ENCODE measurements at regions of chr5 and their contacts with region 1.

Region 1: DNA sequence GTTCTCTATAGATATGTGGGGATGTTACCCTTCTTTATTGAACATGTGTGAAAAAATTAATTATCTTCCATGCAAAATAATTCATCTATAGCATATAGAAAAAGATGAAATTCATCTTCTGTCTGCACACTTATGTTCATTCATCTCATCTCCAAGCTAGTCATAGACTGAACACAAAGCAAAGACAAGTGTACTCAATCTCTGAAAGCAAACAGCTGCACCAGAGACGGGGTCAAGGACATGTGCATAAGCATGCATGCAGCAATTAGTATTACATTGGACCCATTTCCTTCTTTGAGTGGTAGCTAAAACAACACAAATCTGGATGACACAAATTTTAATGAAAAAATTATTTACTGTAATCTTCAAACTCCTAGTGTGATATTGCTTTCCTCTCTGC is 547.0 kb upstream of the COX7C start:
- DNase-seq: no peak
- ATAC-seq: no peak
- H3K4me3 Mint-ChIP-seq: no peak overlapping the region
- H3K27ac Mint-ChIP-seq: no peak overlapping the region
- H3K4me1 Mint-ChIP-seq: no peaks in the 10 kb centered on the region
- H3K27me3 Mint-ChIP-seq: no peaks in the 10 kb centered on the region
- CTCF ChIP-seq: no peak

Region 2: DNA sequence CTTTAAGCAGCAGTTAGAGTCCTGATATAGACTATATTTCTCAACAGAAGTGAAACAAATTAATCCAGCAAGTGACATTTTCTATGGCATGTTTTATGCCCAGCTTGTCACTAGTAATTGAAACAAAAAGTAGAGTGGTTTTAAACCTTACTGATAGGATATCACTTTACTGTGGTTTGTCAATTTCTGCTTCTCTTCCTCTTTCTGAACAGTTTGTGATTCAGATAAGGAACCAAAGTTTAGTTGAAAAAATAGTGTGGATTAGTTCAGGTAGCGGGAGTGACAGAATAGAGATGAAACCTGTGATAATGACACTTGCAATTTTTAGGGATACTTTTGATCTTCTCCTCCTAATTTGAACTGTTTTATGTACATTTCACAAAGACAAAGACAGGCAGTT is 1200.3 kb before region 1 on chr5:
- CTCF ChIA-PET with region 1: no interaction called
- POLR2A ChIA-PET with region 1: no interaction called
- intact Hi-C with region 1: no loop called
- DNase-seq: no peak
- ATAC-seq: no peak
- H3K4me3 Mint-ChIP-seq: no peak overlapping the region
- H3K27ac Mint-ChIP-seq: no peak overlapping the region
- H3K4me1 Mint-ChIP-seq: no peaks in the 10 kb centered on the region
- H3K27me3 Mint-ChIP-seq: no peaks in the 10 kb centered on the region
- CTCF ChIP-seq: no peak

Region 3: DNA sequence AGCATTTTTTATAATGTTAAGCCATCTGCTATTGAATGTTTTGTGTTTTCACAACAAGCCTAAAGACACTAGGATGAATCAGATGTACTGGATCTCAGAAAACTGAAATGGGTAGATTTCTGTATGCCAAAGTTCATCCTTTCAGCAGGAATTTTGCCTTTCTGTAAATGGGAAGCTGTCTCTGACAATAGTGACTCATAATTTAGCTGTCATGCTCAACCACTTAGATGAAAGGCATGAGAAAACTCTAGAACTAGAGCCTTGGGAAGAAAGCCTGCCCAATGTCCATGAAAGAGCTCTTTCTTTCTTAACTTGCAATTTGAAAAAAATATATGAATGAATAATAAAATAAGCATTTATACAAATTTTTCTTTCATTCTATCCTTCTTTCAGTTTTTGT is 1070.0 kb before region 1 on chr5:
- CTCF ChIA-PET with region 1: no interaction called
- POLR2A ChIA-PET with region 1: no interaction called
- intact Hi-C with region 1: loop called (anchors 10 kb)
- DNase-seq: no peak
- ATAC-seq: no peak
- H3K4me3 Mint-ChIP-seq: no peak overlapping the region
- H3K27ac Mint-ChIP-seq: no peak overlapping the region
- H3K4me1 Mint-ChIP-seq: no peaks in the 10 kb centered on the region
- H3K27me3 Mint-ChIP-seq: no peaks in the 10 kb centered on the region
- CTCF ChIP-seq: no peak